Endothelial cell of umbilical vein (primary cell): ENCODE measurements at regions of chr12 and their contacts with region 1.

Region 1: GRCh38 chr12:11730299-11731041 is 81.0 kb downstream of the ETV6 start:
- DNase-seq: no peak
- H3K4me3 ChIP-seq: no peak overlapping the region
- H3K27ac ChIP-seq: peak overlapping the region; percentile 91
- H3K4me1 ChIP-seq: peaks cover 43% of the 10 kb centered on the region
- H3K27me3 ChIP-seq: no peaks in the 10 kb centered on the region
- CTCF ChIP-seq: no peak
- POLR2A ChIP-seq: no peak

Region 2: DNA sequence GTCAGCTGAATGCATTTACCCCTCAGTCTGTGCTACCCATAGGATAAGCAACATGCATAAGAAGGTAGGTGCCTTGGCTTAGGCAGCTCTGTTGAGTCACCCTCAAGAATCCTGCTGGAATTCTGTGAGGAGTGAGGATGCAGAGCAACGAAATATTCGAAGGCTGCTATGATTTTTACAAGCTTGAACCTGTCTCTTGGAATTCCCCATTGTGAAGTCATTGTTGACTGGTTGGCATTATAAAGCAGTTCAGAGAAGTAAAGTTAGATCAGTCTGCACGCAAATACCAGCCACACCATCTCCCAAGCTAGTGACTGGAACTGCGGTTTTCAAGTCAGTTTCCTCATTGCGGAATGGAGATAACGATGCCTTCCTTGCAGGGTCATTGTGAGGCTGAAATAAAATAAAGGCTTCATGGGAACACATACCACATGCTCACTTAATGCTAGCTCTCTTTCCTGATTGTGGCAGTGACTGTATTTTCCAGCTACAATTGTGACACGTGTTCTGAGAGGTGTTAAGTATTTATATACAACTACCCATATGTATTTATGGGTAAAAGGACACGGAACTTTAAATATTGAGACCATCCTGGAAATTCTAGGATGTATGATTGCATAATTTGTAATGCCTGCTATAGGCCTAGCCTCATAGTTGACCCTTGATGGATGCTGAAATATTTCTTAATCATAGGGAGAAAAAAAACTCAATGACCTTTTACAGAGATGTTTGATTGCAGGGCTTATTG is 15.7 kb after region 1 on chr12:
- CTCF ChIA-PET with region 1: interaction called, 17 read pairs
- POLR2A ChIA-PET with region 1: no interaction called
- dilution Hi-C with region 1: no loop called
- intact Hi-C with region 1: no loop called
- DNase-seq: peak; percentile 92
- H3K4me3 ChIP-seq: no peak overlapping the region
- H3K27ac ChIP-seq: peak overlapping the region; percentile 74
- H3K4me1 ChIP-seq: peaks cover 34% of the 10 kb centered on the region
- H3K27me3 ChIP-seq: no peaks in the 10 kb centered on the region
- CTCF ChIP-seq: no peak
- POLR2A ChIP-seq: peak; percentile 58

Region 3: GRCh38 chr12:11836282-11837151 is 106.0 kb after region 1 on chr12:
- CTCF ChIA-PET with region 1: no interaction called
- POLR2A ChIA-PET with region 1: no interaction called
- dilution Hi-C with region 1: no loop called
- intact Hi-C with region 1: loop called (anchors 1 kb)
- DNase-seq: no peak
- H3K4me3 ChIP-seq: no peak overlapping the region
- H3K27ac ChIP-seq: no peak overlapping the region
- H3K4me1 ChIP-seq: peaks cover 49% of the 10 kb centered on the region
- H3K27me3 ChIP-seq: no peaks in the 10 kb centered on the region
- CTCF ChIP-seq: no peak
- POLR2A ChIP-seq: no peak

Region 4: GRCh38 chr12:11978726-11979384 is 248.4 kb after region 1 on chr12:
- CTCF ChIA-PET with region 1: no interaction called
- POLR2A ChIA-PET with region 1: no interaction called
- dilution Hi-C with region 1: no loop called
- intact Hi-C with region 1: no loop called
- DNase-seq: no peak
- H3K4me3 ChIP-seq: no peak overlapping the region
- H3K27ac ChIP-seq: no peak overlapping the region
- H3K4me1 ChIP-seq: no peaks in the 10 kb centered on the region
- H3K27me3 ChIP-seq: peaks cover 12 to 19% of the 10 kb centered on the region in 2 experiments
- CTCF ChIP-seq: no peak
- POLR2A ChIP-seq: no peak

Region 5: DNA sequence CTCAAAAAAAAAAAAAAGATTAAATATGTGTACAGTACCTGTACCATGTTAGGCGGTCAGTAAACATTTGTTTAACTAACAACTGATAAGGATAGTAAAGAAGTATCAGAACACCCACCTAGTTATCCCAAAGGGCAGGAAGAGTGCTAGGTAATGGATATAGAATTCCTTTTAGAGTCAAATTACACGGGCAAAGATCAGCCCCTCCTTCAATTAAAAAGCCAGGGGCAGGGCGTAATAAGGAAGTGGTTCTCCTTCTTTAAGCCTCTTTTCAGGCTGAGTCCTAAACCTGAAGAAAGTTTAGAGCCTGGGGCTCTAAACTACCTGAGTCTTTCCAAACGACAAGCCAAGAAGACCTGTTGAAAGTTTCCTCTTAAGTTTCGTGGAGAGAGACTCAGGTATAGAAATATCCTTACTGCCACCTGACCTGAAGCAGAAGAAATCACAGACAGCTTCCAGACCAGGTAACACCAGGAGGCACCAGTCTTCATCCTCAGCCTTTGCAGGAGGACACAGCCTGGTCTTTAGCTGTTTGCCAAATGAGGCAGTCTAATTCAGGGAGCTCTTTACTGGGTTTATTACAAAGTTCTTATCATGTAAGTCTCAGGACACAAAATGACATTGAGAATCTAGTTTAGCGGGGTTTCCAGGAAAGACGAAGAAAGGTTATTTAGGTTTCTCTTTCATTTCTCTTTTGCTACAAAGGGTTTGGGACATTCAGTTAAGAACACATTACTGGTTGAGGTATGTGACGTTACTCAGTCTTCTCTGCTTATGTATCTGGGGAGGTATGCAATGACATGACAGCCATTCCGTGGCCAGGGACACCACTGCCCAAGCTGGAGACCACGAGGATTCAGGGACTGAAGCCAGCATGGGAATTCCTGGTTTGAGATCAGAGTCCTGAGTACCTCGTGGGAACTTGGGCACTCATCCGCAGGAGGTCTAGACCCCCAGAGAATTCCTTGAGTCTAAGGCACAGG is 340.5 kb after region 1 on chr12 and contains the start of gene BCL2L14:
- CTCF ChIA-PET with region 1: no interaction called
- POLR2A ChIA-PET with region 1: no interaction called
- dilution Hi-C with region 1: no loop called
- intact Hi-C with region 1: no loop called
- DNase-seq: no peak
- H3K4me3 ChIP-seq: no peak within 1 kb of the TSS
- H3K27ac ChIP-seq: no peak within 1 kb of the TSS
- H3K4me1 ChIP-seq: no peaks in the 10 kb centered on the region
- H3K27me3 ChIP-seq: peaks cover 12 to 17% of the 10 kb centered on the region in 2 experiments
- CTCF ChIP-seq: no peak
- POLR2A ChIP-seq: no peak
- total RNA-seq, gene BCL2L14: not detected in 2 replicates